ENCODE measurements at regions of chr14 and their contacts with region 1.

Region 1: DNA sequence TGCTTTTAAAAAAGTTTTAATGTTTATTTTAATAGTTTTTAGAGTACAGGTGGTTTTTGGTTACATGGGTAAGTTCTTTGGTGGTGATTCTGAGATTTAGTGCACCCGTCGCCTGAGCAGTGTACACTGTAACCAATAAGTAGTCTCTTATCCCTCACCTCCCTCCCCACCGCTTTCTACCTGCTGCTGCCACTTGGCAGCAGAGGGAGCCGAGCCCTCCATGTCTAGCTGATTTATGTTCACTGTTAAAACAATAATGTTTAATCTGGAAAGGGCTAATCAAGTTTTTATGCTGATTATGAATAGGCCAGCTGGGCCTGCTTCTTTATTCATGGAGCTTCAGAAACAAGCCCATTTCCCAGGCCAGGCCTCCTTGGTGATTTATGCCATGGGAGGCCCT is 73.1 kb downstream of the ADCK1 start:
- DNase-seq: no peak
- ATAC-seq: no peak
- H3K4me3 ChIP-seq: no peak overlapping the region
- H3K27ac ChIP-seq: no peak overlapping the region
- H3K4me1 ChIP-seq: peaks cover 0 to 4% (median 0%) of the 10 kb centered on the region in 12 donors
- H3K27me3 ChIP-seq: no peaks in the 10 kb centered on the region
- CTCF ChIP-seq: no peak
- POLR2A ChIP-seq: no peak

Region 2: DNA sequence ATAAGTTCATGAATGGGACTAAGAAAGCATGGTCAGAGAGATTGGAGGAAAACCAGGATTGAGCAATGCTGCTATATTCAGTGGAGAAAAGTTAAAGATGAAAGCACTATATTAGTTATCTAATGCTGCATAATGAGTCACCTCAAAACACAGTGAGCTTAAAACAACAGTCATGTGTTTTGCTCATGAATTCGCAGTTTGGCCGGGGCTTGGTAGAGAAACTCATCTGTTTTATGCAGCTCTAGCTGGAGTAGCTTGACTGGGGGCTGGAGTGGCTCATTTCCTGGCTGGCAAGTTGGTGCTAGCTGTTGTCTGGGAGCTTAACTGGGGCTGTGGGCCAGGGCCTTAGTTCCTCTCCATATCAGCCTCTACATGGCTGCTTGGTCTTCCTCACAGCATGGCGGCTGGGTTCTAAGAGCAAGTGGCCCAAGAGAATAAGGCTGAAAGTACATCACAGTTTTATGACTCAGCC is 17.0 kb after region 1 on chr14:
- intact Hi-C with region 1: no loop called
- DNase-seq: no peak
- ATAC-seq: no peak
- H3K4me3 ChIP-seq: no peak overlapping the region
- H3K27ac ChIP-seq: peak overlapping the region in 1 of 12 donors; percentile 24
- H3K4me1 ChIP-seq: peaks cover 0 to 15% (median 0%) of the 10 kb centered on the region in 12 donors
- H3K27me3 ChIP-seq: no peaks in the 10 kb centered on the region
- CTCF ChIP-seq: no peak
- POLR2A ChIP-seq: no peak

Region 3: DNA sequence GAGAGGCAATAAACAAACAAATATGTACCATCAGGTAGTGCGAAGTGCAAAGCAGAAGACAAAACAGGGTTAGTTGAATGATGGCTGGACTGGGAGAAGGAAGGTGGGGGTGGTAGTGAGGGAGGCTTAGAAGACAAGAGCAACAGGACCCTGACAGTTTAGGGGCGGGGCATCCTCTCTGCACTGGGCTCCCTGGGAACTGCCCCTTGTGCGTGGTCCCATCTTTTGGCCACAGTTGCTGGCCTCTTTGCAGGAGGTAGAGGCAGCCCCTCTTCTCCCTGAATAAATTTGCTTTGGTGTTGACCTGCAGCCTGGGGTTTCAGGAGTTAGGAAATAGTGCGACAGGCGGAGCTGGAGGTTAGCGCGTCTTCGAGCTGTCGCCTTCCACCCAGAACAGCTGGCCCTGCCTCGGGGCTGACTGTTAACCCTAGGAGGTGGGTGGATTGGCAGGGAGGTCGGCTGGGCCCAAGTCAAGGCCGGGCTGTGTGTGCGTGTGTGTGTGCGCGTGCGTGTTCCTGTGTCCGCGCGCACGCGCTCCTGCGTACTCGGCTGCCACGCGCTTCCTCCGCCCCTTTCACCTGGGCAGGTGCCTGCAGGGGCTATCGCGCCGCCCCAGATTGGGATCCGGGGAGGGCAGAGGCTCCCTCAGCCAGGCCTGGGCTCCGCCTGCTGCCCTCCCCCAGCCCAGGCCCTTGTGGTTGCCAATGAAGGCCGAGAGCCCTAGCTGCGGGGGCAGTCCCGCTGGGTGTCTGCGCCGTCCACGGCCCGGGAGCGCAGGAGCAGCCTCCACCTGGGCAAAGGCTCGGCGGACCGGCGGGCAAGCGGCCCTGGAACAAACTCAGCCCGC is 107.7 kb after region 1 on chr14:
- intact Hi-C with region 1: loop called in 2 of 10 experiments (anchors 10 kb)
- DNase-seq: peak in 2 of 5 donors; percentile 46 to 55
- ATAC-seq: peak; percentile 16 to 69 (median 55)
- H3K4me3 ChIP-seq: peak overlapping the region in 11 of 12 donors; percentile 25 to 60 (median 47)
- H3K27ac ChIP-seq: peak overlapping the region in 5 of 12 donors; percentile 2 to 67 (median 39)
- H3K4me1 ChIP-seq: peaks cover 0 to 12% (median 0%) of the 10 kb centered on the region in 12 donors
- H3K27me3 ChIP-seq: peaks cover 0 to 24% (median 11%) of the 10 kb centered on the region in 9 donors
- CTCF ChIP-seq: no peak
- POLR2A ChIP-seq: no peak